ENCODE measurements at regions of chr10 and their contacts with region 1.

Region 1: GRCh38 chr10:103350501-103351260 is at the start of gene PCGF6:
- DNase-seq: no peak
- H3K4me3 ChIP-seq: peak within 1 kb of the TSS; percentile 74
- H3K27me3 ChIP-seq: no peaks in the 10 kb centered on the region
- CTCF ChIP-seq: peak; percentile 19; the same call in 1 of the 2 replicates
- polyA plus RNA-seq, gene PCGF6: 3.5 and 7.1 TPM in 2 replicates

Region 2: DNA sequence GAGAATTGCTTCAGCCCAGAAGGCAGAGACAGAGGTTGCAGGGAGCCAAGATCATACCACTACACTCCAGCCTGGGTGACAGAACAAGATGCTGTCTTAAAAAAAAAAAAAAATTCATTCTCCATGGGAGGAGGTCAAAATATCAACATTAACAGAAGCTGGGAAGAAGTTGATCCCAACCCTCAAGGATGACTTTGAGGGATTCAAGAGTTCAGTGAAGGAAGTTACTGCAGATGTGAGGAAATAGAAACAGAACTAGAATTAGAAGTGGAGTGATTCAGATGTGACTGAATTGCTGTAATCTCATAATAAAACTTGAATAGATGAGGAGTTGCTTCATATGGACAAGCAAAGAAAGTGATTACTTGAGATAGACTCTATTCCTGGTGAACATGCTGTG is 124.7 kb before region 1 on chr10:
- CTCF ChIA-PET with region 1: no interaction called
- POLR2A ChIA-PET with region 1: interaction called, 12 read pairs
- DNase-seq: no peak
- H3K4me3 ChIP-seq: no peak overlapping the region
- H3K27me3 ChIP-seq: no peaks in the 10 kb centered on the region
- CTCF ChIP-seq: no peak

Region 3: DNA sequence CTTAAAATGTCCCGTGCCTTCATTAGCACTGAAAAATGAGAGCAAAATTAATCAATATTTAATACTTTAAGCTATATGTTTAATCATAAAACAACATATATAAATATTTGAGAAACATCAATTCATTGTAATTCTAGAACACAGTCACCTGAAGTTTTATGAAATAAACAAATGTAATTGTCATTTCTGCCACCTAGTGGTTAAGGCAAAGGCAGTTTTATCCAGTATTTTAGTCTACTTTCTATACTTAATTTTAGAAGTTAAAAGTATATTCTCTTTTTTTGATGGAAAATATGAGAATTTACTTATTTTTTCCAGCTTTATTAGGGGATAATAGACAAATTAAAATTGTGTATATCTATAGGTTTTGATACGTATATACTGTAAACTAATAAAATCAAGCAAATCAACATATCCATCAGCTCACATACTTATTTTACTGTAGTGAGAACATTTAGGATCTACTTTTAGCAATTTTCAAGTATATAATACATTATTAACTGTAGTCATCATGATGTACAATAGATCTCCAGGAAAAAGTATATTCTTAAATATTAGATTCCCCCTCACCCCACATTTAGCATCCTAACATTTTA is 16.7 kb before region 1 on chr10:
- CTCF ChIA-PET with region 1: interaction called, 12 read pairs
- POLR2A ChIA-PET with region 1: no interaction called
- DNase-seq: no peak
- H3K4me3 ChIP-seq: no peak overlapping the region
- H3K27me3 ChIP-seq: no peaks in the 10 kb centered on the region
- CTCF ChIP-seq: peak; percentile 54